Activated CD4-positive, alpha-beta memory T cell treated with anti-CD3 and anti-CD28 coated beads, Interleukin-2, amount 10 ng/mL, durations not matched to agents 7 days and 5 days (primary cell): ENCODE measurements at regions of chr4 and their contacts with region 1.

Region 1: DNA sequence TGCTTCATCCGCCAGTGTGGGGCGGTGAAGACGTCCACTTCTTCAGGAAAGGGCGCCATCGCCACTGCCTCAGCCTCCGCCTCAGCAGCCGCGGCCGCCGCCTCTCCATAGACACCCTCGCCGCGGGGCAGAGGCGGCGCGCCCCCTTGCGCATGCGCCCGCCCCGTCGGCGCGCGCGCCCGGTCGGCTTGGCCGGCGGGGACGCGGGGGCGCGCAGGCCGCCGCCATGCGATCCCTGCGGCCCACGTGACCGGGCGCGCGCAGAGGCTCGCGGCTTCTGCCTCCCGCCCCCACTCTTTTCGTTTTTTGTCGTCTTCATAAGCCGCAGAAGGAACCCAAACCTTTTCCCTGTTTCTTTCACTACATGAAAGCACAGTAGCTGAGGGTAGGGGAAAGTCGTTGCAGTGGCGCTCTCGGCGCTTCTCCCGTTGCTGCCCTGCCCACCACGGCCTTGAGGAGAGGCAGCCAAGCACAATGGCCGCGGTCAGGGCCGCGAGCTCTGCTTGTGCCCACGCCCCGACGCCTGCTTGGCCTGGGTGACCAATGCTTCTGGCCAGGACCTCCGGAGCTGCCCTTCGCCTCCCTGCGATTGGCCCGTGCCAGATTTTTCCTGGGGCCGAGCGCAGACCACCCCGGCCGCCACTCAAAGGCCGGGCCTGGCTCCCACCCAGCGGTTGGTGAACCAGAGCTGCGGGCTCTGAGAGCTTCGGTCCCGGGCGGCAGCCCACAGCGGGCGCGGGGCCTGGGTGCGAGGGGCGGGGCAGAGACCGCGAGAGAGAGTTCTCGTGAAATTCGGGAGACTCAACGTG is at the start of gene FBXL5:
- DNase-seq: peak; percentile 83
- H3K4me3 Mint-ChIP-seq: peak within 1 kb of the TSS; percentile 94
- H3K27ac Mint-ChIP-seq: peak within 1 kb of the TSS; percentile 95
- H3K4me1 Mint-ChIP-seq: peaks cover 50% of the 10 kb centered on the region
- H3K27me3 Mint-ChIP-seq: no peaks in the 10 kb centered on the region
- total RNA-seq, gene FBXL5: 43.9 to 44.6 TPM

Region 2: DNA sequence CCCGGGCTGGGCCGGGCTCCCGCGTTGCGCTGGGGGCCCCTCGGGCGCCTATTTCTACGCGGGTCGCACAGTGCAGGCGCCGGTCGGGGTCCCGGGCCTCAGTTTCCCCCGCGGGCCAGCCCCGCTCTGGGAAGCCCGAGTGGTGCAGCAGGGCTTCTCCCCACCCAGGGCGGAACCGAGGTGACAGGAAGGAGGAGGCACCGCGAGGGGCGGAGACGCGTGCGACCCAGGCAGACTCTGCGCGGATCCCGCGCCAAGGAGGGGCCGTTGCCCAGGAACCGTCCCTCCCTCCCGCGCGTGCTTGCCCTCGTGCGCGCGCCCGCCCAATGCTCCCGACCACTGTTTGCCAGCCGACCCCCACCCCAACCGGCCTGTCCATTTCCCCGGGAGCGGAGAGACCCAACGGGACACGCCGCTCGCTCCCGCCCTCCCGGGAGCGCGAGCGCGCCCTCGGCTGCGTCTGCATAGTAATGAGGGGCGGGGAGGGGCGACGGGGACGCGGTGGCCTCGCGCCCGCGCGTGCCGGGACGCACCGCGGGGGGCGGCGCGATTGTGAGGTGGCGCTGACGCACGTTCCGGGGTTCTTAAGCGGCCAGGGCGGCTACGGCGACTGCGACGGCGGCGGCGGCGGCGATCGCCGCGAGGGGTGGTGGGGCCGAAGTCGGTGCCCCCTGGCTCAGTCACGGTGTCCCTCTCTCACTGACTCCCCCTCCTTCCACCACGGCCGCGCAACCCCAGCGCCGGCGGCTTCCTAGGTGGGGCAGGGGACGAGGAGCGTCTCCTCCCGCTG is 653.4 kb before region 1 on chr4 and contains the start of gene CPEB2:
- CTCF ChIA-PET with region 1: no interaction called
- POLR2A ChIA-PET with region 1: interaction called, 18 read pairs
- DNase-seq: peak; percentile 93
- H3K4me3 Mint-ChIP-seq: peak within 1 kb of the TSS; percentile 87
- H3K27ac Mint-ChIP-seq: peak within 1 kb of the TSS; percentile 97
- H3K4me1 Mint-ChIP-seq: peaks cover 25% of the 10 kb centered on the region
- H3K27me3 Mint-ChIP-seq: no peaks in the 10 kb centered on the region
- total RNA-seq, gene CPEB2: 17.6 to 20.4 TPM

Region 3: DNA sequence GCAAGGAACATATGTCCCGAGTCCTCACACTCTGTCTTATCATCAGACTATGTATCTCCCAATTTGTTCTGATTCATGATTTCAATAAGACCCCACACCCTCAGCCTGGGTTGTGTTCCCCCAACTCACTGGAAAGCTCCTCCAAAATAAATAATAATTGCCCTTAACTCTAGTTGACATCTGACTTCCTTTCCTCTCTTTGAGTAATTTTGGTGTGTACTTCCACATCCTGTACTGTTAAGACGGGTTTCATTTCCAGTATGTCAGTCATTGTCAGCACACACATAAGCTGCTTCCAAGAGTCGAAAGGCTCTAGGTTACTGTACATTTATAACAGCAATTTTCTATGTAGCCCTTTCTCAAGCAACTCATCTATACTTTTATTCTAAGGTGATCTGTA is 279.8 kb before region 1 on chr4:
- CTCF ChIA-PET with region 1: no interaction called
- POLR2A ChIA-PET with region 1: no interaction called
- DNase-seq: no peak
- H3K4me3 Mint-ChIP-seq: no peak overlapping the region
- H3K27ac Mint-ChIP-seq: no peak overlapping the region
- H3K4me1 Mint-ChIP-seq: peaks cover 18% of the 10 kb centered on the region
- H3K27me3 Mint-ChIP-seq: peaks cover 2% of the 10 kb centered on the region

Region 4: DNA sequence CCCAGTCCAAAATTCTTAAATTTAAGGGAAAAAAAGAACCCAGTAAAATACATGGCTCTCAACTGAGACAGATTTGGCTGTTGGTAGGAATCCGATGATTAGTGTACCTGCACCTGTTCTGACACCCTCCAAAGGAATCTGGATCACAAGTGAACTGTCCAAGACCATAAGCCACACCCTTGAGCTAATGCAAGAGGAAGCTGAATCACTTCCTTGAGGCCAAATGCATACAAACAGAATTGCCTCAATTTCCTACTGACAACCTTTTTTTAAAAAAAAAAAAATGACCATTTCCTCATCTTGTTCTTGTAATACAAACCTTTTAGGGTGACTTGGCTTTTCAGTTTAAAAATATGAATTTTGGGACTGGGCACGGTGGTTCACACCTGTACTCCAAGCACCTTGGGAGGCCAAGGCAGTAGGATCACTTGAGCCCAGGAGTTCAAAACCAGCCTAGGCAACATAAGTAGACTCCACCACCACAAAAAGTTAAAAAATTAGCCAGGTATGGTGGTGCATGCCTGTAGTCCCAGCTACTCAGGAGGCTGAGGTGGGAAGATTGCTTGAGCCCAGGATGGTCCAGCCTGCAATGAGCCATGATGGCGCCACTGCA is 10.4 kb after region 1 on chr4:
- CTCF ChIA-PET with region 1: interaction called, 5 read pairs
- POLR2A ChIA-PET with region 1: interaction called, 29 read pairs
- DNase-seq: no peak
- H3K4me3 Mint-ChIP-seq: no peak overlapping the region
- H3K27ac Mint-ChIP-seq: peak overlapping the region; percentile 66
- H3K4me1 Mint-ChIP-seq: peaks cover 24% of the 10 kb centered on the region
- H3K27me3 Mint-ChIP-seq: no peaks in the 10 kb centered on the region

Region 5: GRCh38 chr4:15674046-15674445 is 18.6 kb after region 1 on chr4:
- CTCF ChIA-PET with region 1: interaction called, 3 read pairs
- POLR2A ChIA-PET with region 1: interaction called, 19 read pairs
- DNase-seq: no peak
- H3K4me3 Mint-ChIP-seq: no peak overlapping the region
- H3K27ac Mint-ChIP-seq: no peak overlapping the region
- H3K4me1 Mint-ChIP-seq: peaks cover 29% of the 10 kb centered on the region
- H3K27me3 Mint-ChIP-seq: no peaks in the 10 kb centered on the region

Region 6: DNA sequence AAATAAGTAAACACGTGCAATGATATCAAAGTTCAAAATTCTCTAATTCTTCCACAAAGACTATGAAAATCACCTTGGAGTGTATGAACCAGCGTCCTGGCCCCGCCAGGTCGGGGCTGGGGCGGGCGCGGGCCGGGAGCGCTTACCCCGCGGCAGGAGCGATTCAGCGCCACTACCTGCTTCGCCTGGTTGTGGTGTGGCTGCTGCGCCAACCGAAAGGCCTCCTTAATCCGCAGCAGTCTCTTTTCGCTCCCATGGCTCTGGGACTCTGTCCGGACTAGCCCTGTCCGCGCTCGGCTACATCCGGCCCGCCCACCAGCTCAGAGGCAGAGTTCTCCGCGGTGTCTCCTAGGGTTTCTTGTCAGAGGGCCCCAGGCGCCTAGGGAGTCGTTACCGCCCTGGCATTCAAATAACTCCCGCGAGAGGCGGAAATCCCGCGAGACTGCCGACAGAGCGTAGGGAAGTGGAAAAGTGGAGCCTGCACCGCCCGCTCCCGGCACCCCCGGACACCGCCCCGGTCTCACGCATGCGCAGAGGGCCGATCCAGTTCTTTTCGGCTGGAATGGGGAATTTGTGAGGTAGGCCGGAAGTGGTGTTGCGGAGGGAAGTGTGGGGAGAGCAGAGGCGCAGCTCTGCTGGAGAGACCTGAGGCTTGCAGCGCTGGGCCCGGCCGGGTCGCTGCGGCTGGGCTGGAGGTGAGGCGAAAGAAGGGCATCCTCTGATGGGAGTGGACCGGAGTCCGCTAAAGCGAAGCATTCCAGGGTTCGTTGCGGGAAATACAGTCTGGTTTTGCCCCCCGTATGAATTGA is 26.0 kb after region 1 on chr4 and contains the start of gene FAM200B:
- CTCF ChIA-PET with region 1: interaction called, 3 read pairs
- POLR2A ChIA-PET with region 1: interaction called, 60 read pairs
- DNase-seq: peak; percentile 98
- H3K4me3 Mint-ChIP-seq: peak within 1 kb of the TSS; percentile 97
- H3K27ac Mint-ChIP-seq: peak within 1 kb of the TSS; percentile 92
- H3K4me1 Mint-ChIP-seq: peaks cover 46% of the 10 kb centered on the region
- H3K27me3 Mint-ChIP-seq: no peaks in the 10 kb centered on the region
- total RNA-seq, gene FAM200B: 15.8 to 16.0 TPM